Aorta (tissue), 5 donors: ENCODE measurements at regions of chr4 and their contacts with region 1.

Region 1: DNA sequence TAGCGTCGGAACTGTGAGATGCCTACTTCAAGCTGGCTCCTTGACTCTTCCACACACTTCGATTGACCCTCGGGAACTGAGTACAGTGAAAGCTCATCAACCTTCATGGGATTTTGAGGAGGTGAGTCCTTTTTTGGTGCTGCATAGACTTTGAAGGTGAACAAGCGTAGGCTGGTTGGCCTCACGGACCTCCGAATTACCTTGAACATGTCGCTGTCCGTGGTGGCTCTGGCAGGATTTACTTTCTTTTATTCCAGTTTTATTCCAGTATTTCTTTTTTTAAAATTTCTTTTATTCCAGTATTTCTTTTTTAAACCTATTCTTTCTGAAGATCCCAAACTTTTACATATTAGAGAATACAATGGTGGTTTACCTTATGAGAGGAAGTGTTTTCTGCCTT is 45.2 kb downstream of the YTHDC1 start:
- DNase-seq: no peak
- ATAC-seq: no peak
- H3K4me3 ChIP-seq: no peak overlapping the region
- H3K27ac ChIP-seq: no peak overlapping the region
- H3K4me1 ChIP-seq: no peaks in the 10 kb centered on the region
- H3K27me3 ChIP-seq: no peaks in the 10 kb centered on the region

Region 2: GRCh38 chr4:68349649-68350360 is 45.1 kb after region 1 on chr4 and contains the start of gene YTHDC1:
- intact Hi-C with region 1: no loop called
- DNase-seq: peak; percentile 98 to 99
- ATAC-seq: peak; percentile 99
- H3K4me3 ChIP-seq: peak within 1 kb of the TSS; percentile 68 to 90
- H3K27ac ChIP-seq: peak within 1 kb of the TSS; percentile 84 to 99
- H3K4me1 ChIP-seq: peaks cover 1 to 8% of the 10 kb centered on the region in 2 donors
- H3K27me3 ChIP-seq: no peaks in the 10 kb centered on the region
- total RNA-seq, gene YTHDC1: 91.4 to 103 TPM

Region 3: GRCh38 chr4:68361146-68361589 is 56.4 kb after region 1 on chr4:
- intact Hi-C with region 1: loop called in 1 of 2 experiments (anchors 5 kb)
- DNase-seq: no peak
- ATAC-seq: no peak
- H3K4me3 ChIP-seq: no peak overlapping the region
- H3K27ac ChIP-seq: no peak overlapping the region
- H3K4me1 ChIP-seq: no peaks in the 10 kb centered on the region
- H3K27me3 ChIP-seq: no peaks in the 10 kb centered on the region